PC-9 (cell line): ENCODE measurements at regions of chrX and their contacts with region 1.

Region 1: DNA sequence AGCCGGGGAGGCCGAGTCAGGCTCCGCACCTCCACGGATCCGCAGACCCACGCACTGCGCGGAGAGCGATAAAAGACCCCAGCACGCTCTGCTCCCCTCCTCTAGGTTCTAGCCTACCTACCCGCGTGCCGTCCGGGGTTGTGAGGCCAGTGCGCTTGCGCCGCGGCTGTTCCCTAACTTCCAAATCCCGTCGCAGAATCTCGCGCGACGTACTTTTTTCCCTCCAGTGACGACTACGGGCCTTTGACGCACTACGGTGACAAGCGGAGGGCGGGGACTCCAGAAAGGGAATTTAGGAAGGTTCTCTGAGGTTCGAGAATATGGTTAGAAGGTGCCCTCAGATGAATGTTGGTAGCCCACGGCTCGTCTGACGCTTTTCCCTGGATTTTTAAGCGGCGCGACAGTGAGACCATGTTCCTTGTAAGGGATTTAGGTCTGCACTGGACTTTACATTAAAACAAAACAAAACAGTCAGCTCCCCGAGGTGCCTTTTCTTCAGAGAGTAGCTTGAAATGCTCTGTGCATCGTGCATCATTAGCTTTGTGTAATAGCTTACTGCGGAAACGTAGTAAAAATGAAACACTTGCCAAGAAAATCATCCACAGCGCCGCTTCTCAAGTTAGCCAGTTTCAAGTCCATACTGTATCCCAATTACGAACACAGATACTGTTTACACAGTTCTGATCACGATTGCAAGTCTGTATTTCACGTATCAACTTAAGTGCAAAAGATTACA is at the start of gene NKRF:
- DNase-seq: peak; percentile 86 to 94
- H3K4me3 ChIP-seq: peak within 1 kb of the TSS; percentile 79
- H3K27ac ChIP-seq: peak within 1 kb of the TSS; percentile 51
- H3K4me1 ChIP-seq: peaks cover 29% of the 10 kb centered on the region
- H3K27me3 ChIP-seq: no peaks in the 10 kb centered on the region
- CTCF ChIP-seq: no peak
- total RNA-seq, gene NKRF: 25.7 TPM in 2 replicates

Region 2: GRCh38 chrX:119459181-119459580 is 147.3 kb before region 1 on chrX:
- CTCF ChIA-PET with region 1: interaction called, 22 read pairs
- POLR2A ChIA-PET with region 1: no interaction called
- intact Hi-C with region 1: no loop called
- DNase-seq: no peak
- H3K4me3 ChIP-seq: no peak overlapping the region
- H3K27ac ChIP-seq: no peak overlapping the region
- H3K4me1 ChIP-seq: no peaks in the 10 kb centered on the region
- H3K27me3 ChIP-seq: no peaks in the 10 kb centered on the region
- CTCF ChIP-seq: no peak

Region 3: GRCh38 chrX:119655125-119655524 is 48.7 kb after region 1 on chrX:
- CTCF ChIA-PET with region 1: no interaction called
- POLR2A ChIA-PET with region 1: no interaction called
- intact Hi-C with region 1: no loop called
- DNase-seq: peak in 1 of 2 experiments; percentile 7
- H3K4me3 ChIP-seq: no peak overlapping the region
- H3K27ac ChIP-seq: no peak overlapping the region
- H3K4me1 ChIP-seq: peaks cover 18% of the 10 kb centered on the region
- H3K27me3 ChIP-seq: no peaks in the 10 kb centered on the region
- CTCF ChIP-seq: no peak

Region 4: GRCh38 chrX:119693040-119693995 is 86.9 kb after region 1 on chrX and contains the start of gene SEPTIN6:
- CTCF ChIA-PET with region 1: interaction called, 4 read pairs
- POLR2A ChIA-PET with region 1: no interaction called
- intact Hi-C with region 1: loop called (anchors 10 kb)
- DNase-seq: peak; percentile 65 to 85
- H3K4me3 ChIP-seq: peak within 1 kb of the TSS; percentile 81
- H3K27ac ChIP-seq: no peak within 1 kb of the TSS
- H3K4me1 ChIP-seq: peaks cover 13% of the 10 kb centered on the region
- H3K27me3 ChIP-seq: no peaks in the 10 kb centered on the region
- CTCF ChIP-seq: no peak
- total RNA-seq, gene SEPTIN6: 32.8 and 43.7 TPM in 2 replicates

Region 5: GRCh38 chrX:119753571-119754257 is 147.3 kb after region 1 on chrX:
- CTCF ChIA-PET with region 1: no interaction called
- POLR2A ChIA-PET with region 1: interaction called, 42 read pairs
- intact Hi-C with region 1: no loop called
- DNase-seq: peak; percentile 25 to 64
- H3K4me3 ChIP-seq: no peak overlapping the region
- H3K27ac ChIP-seq: no peak overlapping the region
- H3K4me1 ChIP-seq: peaks cover 9% of the 10 kb centered on the region
- H3K27me3 ChIP-seq: no peaks in the 10 kb centered on the region
- CTCF ChIP-seq: peak; percentile 81

Region 6: GRCh38 chrX:119833905-119834304 is 227.5 kb after region 1 on chrX:
- CTCF ChIA-PET with region 1: interaction called, 10 read pairs
- POLR2A ChIA-PET with region 1: no interaction called
- intact Hi-C with region 1: no loop called
- DNase-seq: no peak
- H3K4me3 ChIP-seq: no peak overlapping the region
- H3K27ac ChIP-seq: no peak overlapping the region
- H3K4me1 ChIP-seq: no peaks in the 10 kb centered on the region
- H3K27me3 ChIP-seq: no peaks in the 10 kb centered on the region
- CTCF ChIP-seq: no peak

Region 7: DNA sequence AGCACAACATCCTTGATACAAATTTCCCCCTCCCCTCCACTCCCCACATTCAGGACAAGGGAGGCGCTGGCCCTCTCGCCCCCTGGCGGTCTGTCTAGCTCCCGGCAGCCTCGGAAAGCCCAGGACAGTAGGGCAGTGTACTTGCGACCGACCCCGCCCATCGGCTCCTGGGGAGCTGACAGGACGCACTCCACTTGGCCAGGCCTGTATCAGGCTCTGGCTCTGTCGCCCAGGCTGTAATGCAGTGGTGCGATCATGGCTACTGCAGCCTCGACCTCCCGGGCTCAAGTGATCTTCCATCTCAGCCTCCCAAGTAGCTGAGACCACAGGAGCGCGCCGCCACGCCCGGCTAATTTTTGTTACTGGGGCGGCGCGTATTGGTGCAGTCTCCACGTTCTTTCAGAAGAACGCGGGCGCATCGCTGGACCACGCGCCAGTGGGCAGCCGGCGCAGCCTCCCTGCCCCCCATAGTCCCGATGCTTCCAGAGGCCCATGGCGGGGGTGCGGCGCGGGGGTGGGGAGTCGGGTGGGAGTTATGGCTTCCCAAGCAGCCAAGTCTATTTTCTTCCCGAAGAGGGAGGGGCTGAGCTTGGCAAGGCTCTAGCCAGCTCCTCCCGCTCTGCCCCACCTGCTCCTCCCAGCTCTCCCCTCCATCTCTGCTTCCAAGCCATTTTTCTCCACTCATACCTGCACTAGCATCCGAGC is 281.4 kb after region 1 on chrX:
- CTCF ChIA-PET with region 1: no interaction called
- POLR2A ChIA-PET with region 1: no interaction called
- intact Hi-C with region 1: loop called (anchors 5 kb)
- DNase-seq: peak; percentile 65 to 77
- H3K4me3 ChIP-seq: peak overlapping the region; percentile 66
- H3K27ac ChIP-seq: no peak overlapping the region
- H3K4me1 ChIP-seq: no peaks in the 10 kb centered on the region
- H3K27me3 ChIP-seq: no peaks in the 10 kb centered on the region
- CTCF ChIP-seq: peak; percentile 83